HepG2 (cell line): ENCODE measurements at regions of chr7 and their contacts with region 1.

Region 1: DNA sequence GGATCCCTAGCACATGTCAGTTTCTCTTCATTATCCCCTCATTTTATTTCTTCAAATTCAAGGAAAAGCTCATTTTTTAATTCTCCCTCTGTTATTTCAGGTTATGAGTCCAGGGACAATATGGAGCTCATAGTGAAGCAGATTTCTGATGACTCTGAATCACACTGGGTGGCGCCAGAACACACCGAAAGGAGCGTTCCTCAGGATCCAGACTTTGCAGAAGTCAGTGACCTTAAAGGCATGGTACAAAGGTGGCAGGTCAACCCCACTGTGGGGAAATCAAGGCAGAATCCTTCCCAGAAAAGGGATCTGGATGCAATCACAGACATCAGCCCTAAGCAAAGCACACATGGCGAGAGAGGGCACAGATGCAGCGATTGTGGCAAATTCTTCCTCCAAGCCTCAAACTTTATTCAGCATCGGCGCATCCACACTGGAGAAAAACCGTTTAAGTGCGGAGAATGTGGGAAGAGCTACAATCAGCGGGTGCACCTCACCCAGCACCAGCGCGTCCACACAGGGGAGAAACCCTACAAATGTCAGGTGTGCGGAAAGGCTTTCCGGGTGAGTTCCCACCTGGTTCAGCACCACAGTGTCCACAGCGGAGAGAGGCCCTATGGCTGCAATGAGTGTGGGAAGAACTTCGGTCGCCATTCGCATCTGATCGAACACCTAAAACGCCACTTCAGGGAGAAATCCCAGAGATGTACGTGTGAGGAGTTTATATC is 21.4 kb downstream of the ZKSCAN5 start:
- DNase-seq: no peak
- ATAC-seq: peak; percentile 78
- H3K4me3 ChIP-seq: no peak overlapping the region
- H3K27ac ChIP-seq: no peak overlapping the region
- H3K4me1 ChIP-seq: no peaks in the 10 kb centered on the region
- H3K27me3 ChIP-seq: no peaks in the 10 kb centered on the region
- CTCF ChIP-seq: peak; percentile 71
- EP300 ChIP-seq: no peak
- POLR2A ChIP-seq: no peak
- RAD21 ChIP-seq: 0 out of 2 replicates have a peak, but pooled peaks have one; percentile 29

Region 2: DNA sequence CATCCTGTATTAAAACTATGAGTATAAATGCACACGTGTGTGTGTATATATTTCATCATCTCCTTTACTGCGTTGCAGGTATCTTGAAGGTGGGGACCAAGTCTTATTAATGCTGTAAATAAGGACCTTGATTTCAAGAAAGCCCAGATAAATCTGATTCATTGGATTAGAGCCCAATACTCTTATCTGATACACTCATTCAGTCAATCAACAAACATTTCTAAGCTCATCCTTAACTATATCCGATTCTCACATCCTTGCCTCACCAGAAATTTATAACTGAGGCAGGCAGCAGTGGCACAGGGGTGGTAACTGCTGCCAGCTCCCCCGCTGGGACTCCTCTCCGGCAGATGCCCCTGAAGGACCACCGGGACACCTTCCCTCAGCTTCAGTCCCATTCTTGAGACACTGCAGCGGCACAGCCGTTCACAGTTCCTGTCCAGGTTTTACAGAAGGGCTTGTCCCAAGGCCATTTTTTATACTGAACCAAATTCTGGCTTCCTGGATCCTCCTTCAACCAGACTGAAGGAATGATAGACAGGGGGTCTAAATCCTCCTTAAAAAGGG is 1190.4 kb before region 1 on chr7:
- CTCF ChIA-PET with region 1: no interaction called
- POLR2A ChIA-PET with region 1: no interaction called
- in situ Hi-C with region 1: no loop called
- intact Hi-C with region 1: loop called (anchors 5 kb)
- DNase-seq: no peak
- ATAC-seq: no peak
- H3K4me3 ChIP-seq: no peak overlapping the region
- H3K27ac ChIP-seq: no peak overlapping the region
- H3K4me1 ChIP-seq: no peaks in the 10 kb centered on the region
- H3K27me3 ChIP-seq: no peaks in the 10 kb centered on the region
- CTCF ChIP-seq: no peak
- EP300 ChIP-seq: no peak
- POLR2A ChIP-seq: no peak
- RAD21 ChIP-seq: no peak